GM12878 (cell line): ENCODE measurements at regions of chr1 and their contacts with region 1.

Region 1: GRCh38 chr1:218259800-218260199 is 25.3 kb upstream of the RRP15 start:
- DNase-seq: no peak
- ATAC-seq: peak; percentile 82
- H3K4me3 ChIP-seq: no peak overlapping the region
- H3K27ac ChIP-seq: no peak overlapping the region
- H3K4me1 ChIP-seq: no peaks in the 10 kb centered on the region
- H3K27me3 ChIP-seq: no peaks in the 10 kb centered on the region
- CTCF ChIP-seq: peak; percentile 48 to 54 (median 53); a peak in 5 of 6 replicates
- EP300 ChIP-seq: no peak
- POLR2A ChIP-seq: no peak
- RAD21 ChIP-seq: peak; percentile 44; the same call in 1 of the 2 replicates

Region 2: DNA sequence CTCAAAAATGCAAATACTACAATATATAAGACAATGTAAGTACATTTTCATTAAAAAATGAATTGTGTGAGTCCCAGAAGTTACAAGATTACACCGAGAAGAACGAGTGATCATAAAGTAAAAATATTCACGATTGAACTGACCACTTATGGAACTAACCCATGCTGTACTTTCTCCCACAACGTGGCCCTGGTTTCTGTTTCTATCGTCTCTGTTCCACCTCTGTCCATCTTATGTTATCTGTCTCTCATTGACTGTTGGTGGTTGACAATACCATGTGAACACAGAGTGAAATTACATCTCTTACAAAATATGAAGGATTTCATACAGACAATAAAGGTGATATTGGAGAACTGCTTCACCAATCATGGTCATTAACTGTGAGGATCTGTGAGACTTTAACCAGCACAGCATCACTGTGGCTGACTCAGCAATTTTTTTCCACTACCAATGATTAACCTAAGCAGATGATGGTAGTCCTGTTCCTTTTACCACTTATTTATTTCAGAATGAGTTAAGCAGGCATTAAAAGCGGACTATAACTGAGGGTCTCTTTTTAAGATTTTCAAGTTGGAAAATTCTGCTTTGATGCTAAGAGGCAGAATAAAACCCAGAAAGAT is 250.5 kb after region 1 on chr1:
- CTCF ChIA-PET with region 1: no interaction called
- POLR2A ChIA-PET with region 1: no interaction called
- RAD21 ChIA-PET with region 1: no interaction called
- SMC1A ChIA-PET with region 1: no interaction called
- in situ Hi-C with region 1: no loop called
- intact Hi-C with region 1: loop called (anchors 10 kb)
- DNase-seq: no peak
- ATAC-seq: peak; percentile 48; the same call in 2 of the 3 replicates
- H3K4me3 ChIP-seq: no peak overlapping the region
- H3K27ac ChIP-seq: no peak overlapping the region
- H3K4me1 ChIP-seq: no peaks in the 10 kb centered on the region
- H3K27me3 ChIP-seq: no peaks in the 10 kb centered on the region
- CTCF ChIP-seq: no peak
- EP300 ChIP-seq: no peak
- POLR2A ChIP-seq: no peak
- RAD21 ChIP-seq: no peak